CD4-positive, alpha-beta T cell (primary cell): ENCODE measurements at regions of chr2 and their contacts with region 1.

Region 1: DNA sequence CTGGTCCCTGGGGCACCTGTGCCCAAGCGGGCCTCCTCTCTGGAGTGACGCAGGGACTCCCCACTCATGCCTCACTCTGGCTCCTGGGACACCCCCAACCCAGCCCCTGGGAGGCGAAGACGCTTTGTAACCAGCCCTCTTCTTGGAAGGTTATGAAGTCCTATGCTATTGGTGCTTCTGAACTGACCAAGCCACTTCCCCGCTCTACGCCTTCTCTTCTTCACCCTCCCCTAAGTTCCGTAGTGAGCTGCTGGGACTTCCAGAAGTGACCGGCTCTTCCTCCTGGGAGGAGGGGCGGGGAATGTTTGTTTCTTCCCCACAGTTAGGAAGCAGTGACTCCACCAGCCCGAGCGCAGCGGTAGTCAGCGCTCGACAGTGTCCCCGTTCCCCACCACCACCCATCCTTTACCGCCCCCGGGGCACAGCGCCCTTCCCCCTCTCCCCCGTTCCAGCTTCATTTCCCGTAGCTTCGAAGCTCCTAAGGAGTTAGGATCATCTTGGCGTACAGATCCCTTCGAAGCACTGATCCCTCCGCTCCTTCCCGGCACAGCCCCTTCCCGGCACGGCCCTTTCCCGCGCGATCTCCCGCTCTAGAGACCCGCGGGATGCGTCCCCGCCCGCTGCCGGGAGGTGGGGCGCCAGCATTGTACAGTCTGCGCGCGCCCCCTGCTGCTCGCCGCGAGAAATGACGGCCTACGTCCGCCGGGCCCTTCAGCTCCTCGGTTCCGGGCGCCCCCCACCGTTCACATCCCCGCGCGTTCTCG is 25.3 kb upstream of the NOTO start:
- DNase-seq: peak; percentile 77 to 95 (median 86)
- ATAC-seq: peak; percentile 92
- H3K4me3 ChIP-seq: peak overlapping the region; percentile 70
- H3K4me3 Mint-ChIP-seq: peak overlapping the region; percentile 92
- H3K27ac ChIP-seq: no peak overlapping the region
- H3K27ac Mint-ChIP-seq: no peak overlapping the region
- H3K4me1 ChIP-seq: peaks cover 32% of the 10 kb centered on the region
- H3K4me1 Mint-ChIP-seq: peaks cover 15% of the 10 kb centered on the region
- H3K27me3 ChIP-seq: peaks cover 20 to 43% of the 10 kb centered on the region in 2 experiments
- H3K27me3 Mint-ChIP-seq: peaks cover 46% of the 10 kb centered on the region
- CTCF ChIP-seq: peak; percentile 98

Region 2: DNA sequence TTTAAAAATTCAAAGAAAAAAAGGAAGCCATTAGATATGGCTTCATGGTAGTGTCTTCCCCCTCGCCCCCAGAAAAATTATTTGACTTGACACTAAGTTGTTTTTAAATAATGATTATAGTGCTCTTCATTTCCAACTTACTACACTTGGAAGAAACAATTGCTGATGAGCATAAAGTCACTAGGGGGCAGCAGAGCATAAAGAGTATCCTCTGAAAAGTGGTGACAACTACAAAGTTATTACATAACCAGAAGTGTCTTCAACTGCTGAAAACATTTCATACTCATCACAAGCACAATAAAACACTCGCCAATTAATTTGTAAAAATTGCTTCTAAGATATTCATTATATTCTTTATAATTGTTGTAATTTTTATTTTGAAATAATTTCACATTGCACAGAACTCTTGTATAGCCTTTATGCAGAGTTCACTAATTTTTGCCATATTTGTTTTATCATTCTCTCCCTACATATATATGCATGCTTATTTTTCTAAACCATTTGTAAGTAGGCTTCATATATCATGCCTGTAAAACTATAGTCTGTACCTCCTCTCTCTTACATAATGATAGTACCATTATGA is 406.1 kb before region 1 on chr2:
- CTCF ChIA-PET with region 1: no interaction called
- POLR2A ChIA-PET with region 1: no interaction called
- intact Hi-C with region 1: loop called in 1 of 2 experiments (anchors 2 kb)
- DNase-seq: peak in 12 of 14 experiments; percentile 11 to 84 (median 46)
- ATAC-seq: peak; percentile 69
- H3K4me3 ChIP-seq: no peak overlapping the region
- H3K4me3 Mint-ChIP-seq: no peak overlapping the region
- H3K27ac ChIP-seq: no peak overlapping the region
- H3K27ac Mint-ChIP-seq: no peak overlapping the region
- H3K4me1 ChIP-seq: no peaks in the 10 kb centered on the region
- H3K4me1 Mint-ChIP-seq: no peaks in the 10 kb centered on the region
- H3K27me3 ChIP-seq: no peaks in the 10 kb centered on the region
- H3K27me3 Mint-ChIP-seq: no peaks in the 10 kb centered on the region
- CTCF ChIP-seq: peak; percentile 91

Region 3: GRCh38 chr2:72892506-72893173 is 284.4 kb before region 1 on chr2:
- CTCF ChIA-PET with region 1: interaction called, 13 read pairs
- POLR2A ChIA-PET with region 1: interaction called, 6 read pairs
- intact Hi-C with region 1: loop called (anchors 2 to 5 kb)
- DNase-seq: peak in 11 of 14 experiments; percentile 22 to 76 (median 50)
- ATAC-seq: peak; percentile 78
- H3K4me3 ChIP-seq: no peak overlapping the region
- H3K4me3 Mint-ChIP-seq: no peak overlapping the region
- H3K27ac ChIP-seq: no peak overlapping the region
- H3K27ac Mint-ChIP-seq: no peak overlapping the region
- H3K4me1 ChIP-seq: peaks cover 8% of the 10 kb centered on the region
- H3K4me1 Mint-ChIP-seq: no peaks in the 10 kb centered on the region
- H3K27me3 ChIP-seq: peaks cover 52 to 63% of the 10 kb centered on the region in 2 experiments
- H3K27me3 Mint-ChIP-seq: peaks cover 94% of the 10 kb centered on the region
- CTCF ChIP-seq: peak; percentile 48

Region 4: GRCh38 chr2:73071360-73072133 is 105.5 kb before region 1 on chr2 and contains the start of gene SFXN5:
- CTCF ChIA-PET with region 1: interaction called, 23 read pairs
- POLR2A ChIA-PET with region 1: interaction called, 6 read pairs
- intact Hi-C with region 1: loop called (anchors 5 kb)
- DNase-seq: peak; percentile 87 to 96 (median 92)
- ATAC-seq: peak; percentile 84
- H3K4me3 ChIP-seq: peak within 1 kb of the TSS; percentile 84
- H3K4me3 Mint-ChIP-seq: peak within 1 kb of the TSS; percentile 99
- H3K27ac ChIP-seq: peak within 1 kb of the TSS; percentile 81 to 86
- H3K27ac Mint-ChIP-seq: peak within 1 kb of the TSS; percentile 91
- H3K4me1 ChIP-seq: peaks cover 21% of the 10 kb centered on the region
- H3K4me1 Mint-ChIP-seq: peaks cover 31% of the 10 kb centered on the region
- H3K27me3 ChIP-seq: no peaks in the 10 kb centered on the region
- H3K27me3 Mint-ChIP-seq: no peaks in the 10 kb centered on the region
- CTCF ChIP-seq: no peak
- total RNA-seq, gene SFXN5: 5.1 to 5.4 TPM

Region 5: DNA sequence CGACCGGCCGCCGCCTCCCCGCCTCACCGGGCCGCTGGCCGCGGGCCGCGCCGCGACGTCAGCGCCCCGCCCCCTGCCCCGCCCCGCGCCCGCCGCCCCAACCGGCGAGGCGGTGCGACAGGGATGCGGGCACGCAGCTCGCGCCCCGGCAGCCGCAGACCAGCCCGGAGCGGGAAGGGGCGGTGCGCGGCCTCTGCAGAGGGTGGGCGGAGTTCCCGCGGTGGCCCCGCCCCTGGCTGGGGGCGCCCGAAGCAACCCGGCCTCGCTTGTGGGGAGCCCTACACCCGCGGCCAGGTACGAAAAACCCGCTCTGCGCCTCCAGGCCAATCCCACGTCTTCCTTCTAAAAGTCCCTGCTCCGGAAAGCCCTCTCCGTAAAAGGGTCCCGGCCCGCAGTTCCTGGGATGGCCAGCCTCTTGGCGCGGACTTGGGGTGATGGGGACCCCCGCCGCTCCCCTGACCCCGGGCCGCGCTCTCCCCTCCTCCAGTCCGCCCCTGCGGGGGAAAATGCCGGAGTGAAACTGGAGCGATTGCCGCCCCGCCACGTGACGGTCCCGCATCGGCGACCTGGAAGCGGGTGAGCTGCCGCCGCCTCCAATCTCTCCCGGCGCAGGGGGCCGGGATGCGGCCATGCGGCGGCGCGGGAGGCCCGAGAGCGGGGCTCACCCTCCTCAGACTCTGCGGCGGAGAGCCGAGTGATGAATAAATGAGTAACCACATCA is 64.0 kb before region 1 on chr2 and contains the start of gene RAB11FIP5:
- CTCF ChIA-PET with region 1: interaction called, 20 read pairs
- POLR2A ChIA-PET with region 1: interaction called, 4 read pairs
- intact Hi-C with region 1: loop called in 1 of 2 experiments (anchors 2 kb)
- DNase-seq: peak; percentile 58 to 93 (median 75)
- ATAC-seq: peak; percentile 90
- H3K4me3 ChIP-seq: peak within 1 kb of the TSS; percentile 84
- H3K4me3 Mint-ChIP-seq: peak within 1 kb of the TSS; percentile 86
- H3K27ac ChIP-seq: peak within 1 kb of the TSS in 1 of 2 donors; percentile 21
- H3K27ac Mint-ChIP-seq: peak within 1 kb of the TSS; percentile 65
- H3K4me1 ChIP-seq: peaks cover 35% of the 10 kb centered on the region
- H3K4me1 Mint-ChIP-seq: peaks cover 27% of the 10 kb centered on the region
- H3K27me3 ChIP-seq: no peaks in the 10 kb centered on the region
- H3K27me3 Mint-ChIP-seq: no peaks in the 10 kb centered on the region
- CTCF ChIP-seq: no peak
- total RNA-seq, gene RAB11FIP5: 12.6 to 13.8 TPM

Region 6: GRCh38 chr2:73187549-73187948 is 10.5 kb after region 1 on chr2:
- CTCF ChIA-PET with region 1: interaction called, 13 read pairs
- POLR2A ChIA-PET with region 1: no interaction called
- intact Hi-C with region 1: no loop called
- DNase-seq: no peak
- ATAC-seq: no peak
- H3K4me3 ChIP-seq: no peak overlapping the region
- H3K4me3 Mint-ChIP-seq: no peak overlapping the region
- H3K27ac ChIP-seq: no peak overlapping the region
- H3K27ac Mint-ChIP-seq: no peak overlapping the region
- H3K4me1 ChIP-seq: no peaks in the 10 kb centered on the region
- H3K4me1 Mint-ChIP-seq: no peaks in the 10 kb centered on the region
- H3K27me3 ChIP-seq: no peaks in the 10 kb centered on the region
- H3K27me3 Mint-ChIP-seq: peaks cover 32% of the 10 kb centered on the region
- CTCF ChIP-seq: no peak

Region 7: GRCh38 chr2:73588177-73588576 is 411.1 kb after region 1 on chr2:
- CTCF ChIA-PET with region 1: no interaction called
- POLR2A ChIA-PET with region 1: no interaction called
- intact Hi-C with region 1: no loop called
- DNase-seq: no peak
- ATAC-seq: no peak
- H3K4me3 ChIP-seq: no peak overlapping the region
- H3K4me3 Mint-ChIP-seq: no peak overlapping the region
- H3K27ac ChIP-seq: no peak overlapping the region
- H3K27ac Mint-ChIP-seq: no peak overlapping the region
- H3K4me1 ChIP-seq: no peaks in the 10 kb centered on the region
- H3K4me1 Mint-ChIP-seq: peaks cover 6% of the 10 kb centered on the region
- H3K27me3 ChIP-seq: no peaks in the 10 kb centered on the region
- H3K27me3 Mint-ChIP-seq: no peaks in the 10 kb centered on the region
- CTCF ChIP-seq: no peak